Calu3 (cell line): ENCODE measurements at regions of chr18 and their contacts with region 1.

Region 1: DNA sequence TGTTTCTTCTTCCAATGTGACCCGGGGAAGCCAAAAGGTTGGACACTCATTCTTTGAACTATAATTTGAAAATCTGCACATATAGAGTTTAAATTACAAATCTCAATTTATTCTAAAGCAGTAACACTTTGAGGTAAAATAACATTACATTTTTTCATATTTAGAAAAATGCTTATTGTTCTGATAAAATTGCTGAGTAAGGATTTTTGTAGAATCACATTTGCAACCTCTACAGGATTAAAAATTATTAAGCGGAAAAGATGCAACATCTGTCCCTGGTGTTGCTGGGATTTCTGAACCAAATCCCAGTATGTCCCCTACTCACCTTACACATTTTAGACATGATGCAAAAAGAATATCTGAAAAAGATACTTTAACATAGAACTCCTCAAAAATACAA is 10.1 kb downstream of the ZNF519 start:
- DNase-seq: no peak
- H3K4me3 Mint-ChIP-seq: no peak overlapping the region
- H3K27ac Mint-ChIP-seq: no peak overlapping the region
- H3K4me1 Mint-ChIP-seq: no peaks in the 10 kb centered on the region
- H3K27me3 Mint-ChIP-seq: no peaks in the 10 kb centered on the region
- CTCF ChIP-seq: no peak

Region 2: GRCh38 chr18:13435596-13436327 is 686.3 kb before region 1 on chr18:
- CTCF ChIA-PET with region 1: no interaction called
- intact Hi-C with region 1: no loop called
- DNase-seq: no peak
- H3K4me3 Mint-ChIP-seq: no peak overlapping the region
- H3K27ac Mint-ChIP-seq: no peak overlapping the region
- H3K4me1 Mint-ChIP-seq: no peaks in the 10 kb centered on the region
- H3K27me3 Mint-ChIP-seq: peaks cover 64% of the 10 kb centered on the region
- CTCF ChIP-seq: no peak

Region 3: GRCh38 chr18:13696961-13697360 is 425.1 kb before region 1 on chr18:
- CTCF ChIA-PET with region 1: no interaction called
- intact Hi-C with region 1: no loop called
- DNase-seq: no peak
- H3K4me3 Mint-ChIP-seq: no peak overlapping the region
- H3K27ac Mint-ChIP-seq: no peak overlapping the region
- H3K4me1 Mint-ChIP-seq: no peaks in the 10 kb centered on the region
- H3K27me3 Mint-ChIP-seq: no peaks in the 10 kb centered on the region
- CTCF ChIP-seq: no peak

Region 4: GRCh38 chr18:14026199-14026598 is 95.9 kb before region 1 on chr18:
- CTCF ChIA-PET with region 1: no interaction called
- intact Hi-C with region 1: no loop called
- DNase-seq: no peak
- H3K4me3 Mint-ChIP-seq: no peak overlapping the region
- H3K27ac Mint-ChIP-seq: no peak overlapping the region
- H3K4me1 Mint-ChIP-seq: no peaks in the 10 kb centered on the region
- H3K27me3 Mint-ChIP-seq: peaks cover 23% of the 10 kb centered on the region
- CTCF ChIP-seq: no peak

Region 5: GRCh38 chr18:14144628-14144895 is 22.5 kb after region 1 on chr18:
- CTCF ChIA-PET with region 1: no interaction called
- intact Hi-C with region 1: loop called (anchors 2 kb)
- DNase-seq: no peak
- H3K4me3 Mint-ChIP-seq: no peak overlapping the region
- H3K27ac Mint-ChIP-seq: no peak overlapping the region
- H3K4me1 Mint-ChIP-seq: no peaks in the 10 kb centered on the region
- H3K27me3 Mint-ChIP-seq: peaks cover 12% of the 10 kb centered on the region
- CTCF ChIP-seq: no peak